Caco-2 (cell line): ENCODE measurements at regions of chr14 and their contacts with region 1.

Region 1: GRCh38 chr14:64823305-64823861 is 56.3 kb downstream of the SPTB start:
- DNase-seq: peak; percentile 79 to 85
- H3K4me3 ChIP-seq: no peak overlapping the region
- H3K4me3 Mint-ChIP-seq: no peak overlapping the region
- H3K27ac Mint-ChIP-seq: no peak overlapping the region
- H3K4me1 ChIP-seq: no peaks in the 10 kb centered on the region
- H3K4me1 Mint-ChIP-seq: no peaks in the 10 kb centered on the region
- H3K27me3 ChIP-seq: no peaks in the 10 kb centered on the region
- H3K27me3 Mint-ChIP-seq: peaks cover 3% of the 10 kb centered on the region
- CTCF ChIP-seq: peak; percentile 72 to 90

Region 2: GRCh38 chr14:64812217-64812811 is 11.1 kb before region 1 on chr14:
- CTCF ChIA-PET with region 1: interaction called, 10 read pairs
- POLR2A ChIA-PET with region 1: no interaction called
- intact Hi-C with region 1: no loop called
- DNase-seq: peak; percentile 71 to 72
- H3K4me3 ChIP-seq: no peak overlapping the region
- H3K4me3 Mint-ChIP-seq: peak overlapping the region; percentile 3
- H3K27ac Mint-ChIP-seq: no peak overlapping the region
- H3K4me1 ChIP-seq: no peaks in the 10 kb centered on the region; the same call in 1 of the 2 replicates
- H3K4me1 Mint-ChIP-seq: no peaks in the 10 kb centered on the region
- H3K27me3 ChIP-seq: no peaks in the 10 kb centered on the region
- H3K27me3 Mint-ChIP-seq: peaks cover 4% of the 10 kb centered on the region
- CTCF ChIP-seq: no peak

Region 3: GRCh38 chr14:64880221-64881121 is 57.1 kb after region 1 on chr14:
- CTCF ChIA-PET with region 1: interaction called, 27 read pairs
- POLR2A ChIA-PET with region 1: no interaction called
- intact Hi-C with region 1: no loop called
- DNase-seq: peak; percentile 51 to 70
- H3K4me3 ChIP-seq: peak overlapping the region; percentile 61
- H3K4me3 Mint-ChIP-seq: peak overlapping the region; percentile 82
- H3K27ac Mint-ChIP-seq: no peak overlapping the region
- H3K4me1 ChIP-seq: no peaks in the 10 kb centered on the region
- H3K4me1 Mint-ChIP-seq: no peaks in the 10 kb centered on the region
- H3K27me3 ChIP-seq: 0 out of 2 replicates have a peak, but pooled peaks cover 1% of the 10 kb centered on the region
- H3K27me3 Mint-ChIP-seq: peaks cover 31% of the 10 kb centered on the region
- CTCF ChIP-seq: peak in 1 of 2 experiments; percentile 11

Region 4: GRCh38 chr14:64914237-64914971 is 91.0 kb after region 1 on chr14 and contains the start of gene CHURC1:
- CTCF ChIA-PET with region 1: interaction called, 25 read pairs
- POLR2A ChIA-PET with region 1: no interaction called
- intact Hi-C with region 1: no loop called
- DNase-seq: peak; percentile 98 to 99
- H3K4me3 ChIP-seq: peak within 1 kb of the TSS; percentile 98
- H3K4me3 Mint-ChIP-seq: peak within 1 kb of the TSS; percentile 81
- H3K27ac Mint-ChIP-seq: peak within 1 kb of the TSS; percentile 91
- H3K4me1 ChIP-seq: peaks cover 7% of the 10 kb centered on the region
- H3K4me1 Mint-ChIP-seq: peaks cover 11% of the 10 kb centered on the region
- H3K27me3 ChIP-seq: no peaks in the 10 kb centered on the region
- H3K27me3 Mint-ChIP-seq: no peaks in the 10 kb centered on the region
- CTCF ChIP-seq: no peak
- total RNA-seq, gene CHURC1: 51.3 and 52.6 TPM in 2 replicates

Region 5: DNA sequence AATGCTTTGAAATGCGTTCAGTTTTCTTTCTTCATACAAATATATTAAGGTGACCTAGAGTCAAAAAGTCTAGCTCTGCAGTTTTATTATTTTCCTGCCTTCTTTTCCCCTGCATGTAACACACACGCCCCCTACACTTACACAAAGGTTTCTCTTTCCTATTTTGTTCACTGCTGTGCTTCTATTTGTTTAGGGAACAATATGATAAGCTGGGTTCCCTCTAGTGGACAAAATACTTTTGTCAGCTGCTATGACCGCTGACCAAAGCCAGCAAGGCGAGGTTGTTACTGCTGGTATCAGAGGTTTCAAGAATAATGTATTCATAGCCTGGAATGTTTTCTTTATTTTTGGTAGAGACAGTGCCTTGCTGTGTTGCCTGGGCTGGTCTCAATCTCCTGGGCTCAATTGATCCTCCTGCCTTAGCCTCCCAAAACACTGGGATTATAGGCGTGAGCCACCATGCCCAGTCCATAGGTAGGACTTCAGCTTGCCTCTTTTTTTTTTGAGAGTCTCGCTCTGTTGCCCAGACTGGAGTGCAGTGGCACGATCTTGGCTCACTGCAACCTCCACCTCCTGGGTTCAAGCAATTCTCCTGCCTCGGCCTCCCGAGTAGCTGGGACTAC is 196.7 kb after region 1 on chr14:
- CTCF ChIA-PET with region 1: interaction called, 5 read pairs
- POLR2A ChIA-PET with region 1: no interaction called
- intact Hi-C with region 1: loop called (anchors 1 kb)
- DNase-seq: peak; percentile 44 to 66
- H3K4me3 ChIP-seq: no peak overlapping the region
- H3K4me3 Mint-ChIP-seq: no peak overlapping the region
- H3K27ac Mint-ChIP-seq: no peak overlapping the region
- H3K4me1 ChIP-seq: no peaks in the 10 kb centered on the region
- H3K4me1 Mint-ChIP-seq: peaks cover 7% of the 10 kb centered on the region
- H3K27me3 ChIP-seq: no peaks in the 10 kb centered on the region
- H3K27me3 Mint-ChIP-seq: no peaks in the 10 kb centered on the region
- CTCF ChIP-seq: peak; percentile 78 to 79

Region 6: DNA sequence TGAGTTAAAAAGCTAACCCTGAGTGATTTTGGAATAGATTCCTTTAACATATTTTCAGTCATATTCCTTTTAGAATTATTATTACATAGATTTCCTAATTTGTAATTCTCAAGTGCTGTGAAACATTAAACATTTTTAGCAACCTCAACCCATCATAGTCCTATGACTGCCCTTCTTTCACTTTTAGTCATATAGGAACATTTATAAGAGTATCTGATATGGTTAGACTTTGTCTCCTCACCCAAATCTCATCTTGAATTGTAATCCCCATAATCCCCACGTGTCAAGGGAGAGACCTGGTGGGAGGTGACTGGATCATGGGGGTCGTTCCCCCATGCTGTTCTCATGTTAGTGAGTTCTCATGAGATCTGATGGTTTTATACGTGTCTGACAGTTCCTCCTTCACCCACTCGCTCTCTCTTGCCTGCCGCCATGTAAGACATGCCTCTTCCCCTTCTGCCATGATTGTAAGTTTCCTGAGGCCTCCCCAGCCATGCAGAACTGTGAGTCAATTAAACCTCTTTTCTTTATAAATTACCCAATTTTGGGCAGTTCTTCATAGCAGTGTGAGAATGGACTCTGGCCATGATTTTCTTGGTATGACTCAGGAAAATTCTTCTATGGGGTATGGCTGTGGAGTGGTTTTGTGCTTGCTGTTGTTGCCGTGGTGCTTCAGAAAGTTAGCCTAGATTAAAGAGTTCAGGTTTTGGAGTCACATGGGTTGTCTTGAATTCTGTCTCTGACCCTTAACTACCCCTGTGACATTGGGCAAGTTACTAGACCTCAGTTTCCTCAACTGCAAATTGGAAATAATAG is 673.0 kb after region 1 on chr14:
- CTCF ChIA-PET with region 1: no interaction called
- POLR2A ChIA-PET with region 1: no interaction called
- intact Hi-C with region 1: no loop called
- DNase-seq: no peak
- H3K4me3 ChIP-seq: no peak overlapping the region
- H3K4me3 Mint-ChIP-seq: no peak overlapping the region
- H3K27ac Mint-ChIP-seq: no peak overlapping the region
- H3K4me1 ChIP-seq: no peaks in the 10 kb centered on the region
- H3K4me1 Mint-ChIP-seq: no peaks in the 10 kb centered on the region
- H3K27me3 ChIP-seq: no peaks in the 10 kb centered on the region
- H3K27me3 Mint-ChIP-seq: no peaks in the 10 kb centered on the region
- CTCF ChIP-seq: no peak